ENCODE measurements at regions of chr14 and their contacts with region 1.

Region 1: DNA sequence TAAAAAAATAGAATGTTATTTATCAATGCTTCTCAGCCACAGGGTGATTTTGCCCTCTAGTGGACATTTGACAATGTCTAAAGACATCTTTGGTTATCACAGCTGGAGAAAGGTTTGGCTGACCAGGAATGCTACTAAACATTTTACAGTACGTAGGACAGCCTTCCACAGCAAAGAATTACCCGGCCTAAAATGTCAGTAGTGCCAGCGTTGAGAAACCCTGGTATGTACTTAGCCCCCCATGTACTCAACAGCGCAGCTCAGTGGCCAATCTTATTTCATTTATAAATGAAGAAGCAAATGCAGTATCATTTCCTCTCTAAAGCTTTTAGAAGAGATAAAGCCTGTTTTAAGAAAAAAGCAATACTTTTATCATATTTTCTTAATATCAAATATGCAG is 5.8 kb downstream of the MARK3 start:
- DNase-seq: no peak
- ATAC-seq: peak in 1 of 2 donors; percentile 11

Region 2: GRCh38 chr14:103444837-103445524 is 53.9 kb after region 1 on chr14:
- intact Hi-C with region 1: loop called (anchors 5 to 10 kb)
- DNase-seq: no peak
- ATAC-seq: peak; percentile 80 to 93

Measured in left cardiac atrium (tissue), 4 donors.